ENCODE measurements at regions of chr12 and their contacts with region 1.

Region 1: GRCh38 chr12:127125607-127126259 is 1141.2 kb upstream of the TMEM132C start:
- DNase-seq: peak; percentile 99
- ATAC-seq: peak; percentile 90
- H3K4me3 ChIP-seq: peak overlapping the region; percentile 20; the same call in 1 of the 2 replicates
- H3K27ac ChIP-seq: peak overlapping the region; percentile 93
- H3K4me1 ChIP-seq: peaks cover 37% of the 10 kb centered on the region
- H3K27me3 ChIP-seq: no peaks in the 10 kb centered on the region
- CTCF ChIP-seq: 0 out of 2 replicates have a peak, but pooled peaks have one; percentile 14

Region 2: GRCh38 chr12:126952096-126953007 is 173.4 kb before region 1 on chr12:
- CTCF ChIA-PET with region 1: no interaction called
- POLR2A ChIA-PET with region 1: no interaction called
- intact Hi-C with region 1: no loop called
- DNase-seq: no peak
- ATAC-seq: no peak
- H3K4me3 ChIP-seq: no peak overlapping the region
- H3K27ac ChIP-seq: no peak overlapping the region
- H3K4me1 ChIP-seq: no peaks in the 10 kb centered on the region
- H3K27me3 ChIP-seq: peaks cover 36% of the 10 kb centered on the region
- CTCF ChIP-seq: no peak

Region 3: GRCh38 chr12:127083008-127083949 is 42.5 kb before region 1 on chr12:
- CTCF ChIA-PET with region 1: no interaction called
- POLR2A ChIA-PET with region 1: no interaction called
- intact Hi-C with region 1: loop called (anchors 5 kb)
- DNase-seq: peak; percentile 91
- ATAC-seq: peak; percentile 66
- H3K4me3 ChIP-seq: peak overlapping the region; percentile 60
- H3K27ac ChIP-seq: peak overlapping the region; percentile 70
- H3K4me1 ChIP-seq: peaks cover 40% of the 10 kb centered on the region
- H3K27me3 ChIP-seq: no peaks in the 10 kb centered on the region
- CTCF ChIP-seq: no peak

Region 4: GRCh38 chr12:127165567-127166392 is 40.0 kb after region 1 on chr12:
- CTCF ChIA-PET with region 1: no interaction called
- POLR2A ChIA-PET with region 1: no interaction called
- intact Hi-C with region 1: loop called (anchors 5 kb)
- DNase-seq: peak; percentile 82
- ATAC-seq: peak; percentile 91
- H3K4me3 ChIP-seq: peak overlapping the region; percentile 48; the same call in 1 of the 2 replicates
- H3K27ac ChIP-seq: peak overlapping the region; percentile 38
- H3K4me1 ChIP-seq: peaks cover 21% of the 10 kb centered on the region
- H3K27me3 ChIP-seq: no peaks in the 10 kb centered on the region
- CTCF ChIP-seq: no peak